Activated CD8-positive, alpha-beta T cell treated with anti-CD3 and anti-CD28 coated beads, Interleukin-2, amount 10 ng/mL, durations not matched to agents 7 days and 5 days (primary cell): ENCODE measurements at regions of chr12 and their contacts with region 1.

Region 1: GRCh38 chr12:48795480-48796455 is 6.9 kb upstream of the ADCY6 start:
- DNase-seq: peak; percentile 70
- ATAC-seq: peak; percentile 72
- H3K4me3 Mint-ChIP-seq: no peak overlapping the region
- H3K27ac Mint-ChIP-seq: no peak overlapping the region
- H3K4me1 Mint-ChIP-seq: peaks cover 14% of the 10 kb centered on the region
- H3K27me3 Mint-ChIP-seq: peaks cover 14% of the 10 kb centered on the region

Region 2: GRCh38 chr12:48659863-48660262 is 135.9 kb before region 1 on chr12:
- CTCF ChIA-PET with region 1: no interaction called
- POLR2A ChIA-PET with region 1: no interaction called
- DNase-seq: no peak
- ATAC-seq: no peak
- H3K4me3 Mint-ChIP-seq: no peak overlapping the region
- H3K27ac Mint-ChIP-seq: no peak overlapping the region
- H3K4me1 Mint-ChIP-seq: no peaks in the 10 kb centered on the region
- H3K27me3 Mint-ChIP-seq: no peaks in the 10 kb centered on the region

Region 3: GRCh38 chr12:48750769-48751735 is 44.7 kb before region 1 on chr12:
- CTCF ChIA-PET with region 1: interaction called, 267 read pairs
- POLR2A ChIA-PET with region 1: interaction called, 4 read pairs
- DNase-seq: no peak
- ATAC-seq: no peak
- H3K4me3 Mint-ChIP-seq: no peak overlapping the region
- H3K27ac Mint-ChIP-seq: no peak overlapping the region
- H3K4me1 Mint-ChIP-seq: peaks cover 8% of the 10 kb centered on the region
- H3K27me3 Mint-ChIP-seq: peaks cover 16% of the 10 kb centered on the region

Region 4: GRCh38 chr12:48758221-48758620 is 37.5 kb before region 1 on chr12:
- CTCF ChIA-PET with region 1: interaction called, 267 read pairs
- POLR2A ChIA-PET with region 1: interaction called, 4 read pairs
- DNase-seq: no peak
- ATAC-seq: no peak
- H3K4me3 Mint-ChIP-seq: no peak overlapping the region
- H3K27ac Mint-ChIP-seq: no peak overlapping the region
- H3K4me1 Mint-ChIP-seq: peaks cover 17% of the 10 kb centered on the region
- H3K27me3 Mint-ChIP-seq: peaks cover 2% of the 10 kb centered on the region

Region 5: DNA sequence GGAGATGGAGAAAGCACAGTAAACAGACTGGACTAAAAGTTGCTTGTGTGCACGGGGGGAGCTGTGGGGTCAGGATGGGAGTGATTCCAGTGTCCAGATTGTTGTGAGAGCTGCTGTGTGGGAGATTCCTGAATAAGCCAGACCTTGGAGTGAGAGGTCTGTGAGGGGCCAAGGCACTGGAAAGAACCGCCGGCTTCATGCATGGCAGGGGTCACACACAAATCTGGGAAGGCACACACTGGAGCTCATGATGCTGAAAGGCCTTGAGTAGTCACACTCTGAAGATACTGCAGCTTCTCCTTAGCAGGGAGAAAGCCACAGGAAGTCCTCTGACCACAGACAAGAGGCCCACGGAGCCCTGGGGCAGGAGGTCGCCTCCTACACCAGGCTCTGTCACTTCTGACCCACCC is 30.0 kb before region 1 on chr12:
- CTCF ChIA-PET with region 1: interaction called, 38 read pairs
- POLR2A ChIA-PET with region 1: no interaction called
- DNase-seq: peak; percentile 70
- ATAC-seq: peak; percentile 91
- H3K4me3 Mint-ChIP-seq: peak overlapping the region; percentile 35
- H3K27ac Mint-ChIP-seq: peak overlapping the region; percentile 76
- H3K4me1 Mint-ChIP-seq: peaks cover 28% of the 10 kb centered on the region
- H3K27me3 Mint-ChIP-seq: no peaks in the 10 kb centered on the region

Region 6: DNA sequence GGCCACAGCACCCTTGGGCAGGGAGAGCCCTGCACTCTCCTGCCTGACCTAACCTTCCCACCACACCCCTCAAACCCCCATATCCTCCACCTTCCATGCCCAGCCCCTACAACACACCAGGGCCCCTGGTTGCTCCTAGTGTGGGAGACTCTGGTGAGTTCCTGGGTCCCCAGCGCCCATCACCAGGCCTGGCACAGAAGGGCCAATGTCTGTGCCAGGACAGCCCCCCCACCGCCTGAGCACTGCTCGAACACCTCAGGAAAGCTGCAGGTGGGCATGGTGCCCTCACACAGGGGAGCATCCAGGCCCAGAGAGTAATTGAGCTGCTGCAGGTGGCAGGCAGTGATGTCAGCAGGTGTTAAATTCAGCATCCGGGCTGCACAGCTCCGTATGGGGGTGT is 22.1 kb before region 1 on chr12:
- CTCF ChIA-PET with region 1: interaction called, 10 read pairs
- POLR2A ChIA-PET with region 1: no interaction called
- DNase-seq: no peak
- ATAC-seq: no peak
- H3K4me3 Mint-ChIP-seq: no peak overlapping the region
- H3K27ac Mint-ChIP-seq: no peak overlapping the region
- H3K4me1 Mint-ChIP-seq: peaks cover 14% of the 10 kb centered on the region
- H3K27me3 Mint-ChIP-seq: peaks cover 5% of the 10 kb centered on the region

Region 7: DNA sequence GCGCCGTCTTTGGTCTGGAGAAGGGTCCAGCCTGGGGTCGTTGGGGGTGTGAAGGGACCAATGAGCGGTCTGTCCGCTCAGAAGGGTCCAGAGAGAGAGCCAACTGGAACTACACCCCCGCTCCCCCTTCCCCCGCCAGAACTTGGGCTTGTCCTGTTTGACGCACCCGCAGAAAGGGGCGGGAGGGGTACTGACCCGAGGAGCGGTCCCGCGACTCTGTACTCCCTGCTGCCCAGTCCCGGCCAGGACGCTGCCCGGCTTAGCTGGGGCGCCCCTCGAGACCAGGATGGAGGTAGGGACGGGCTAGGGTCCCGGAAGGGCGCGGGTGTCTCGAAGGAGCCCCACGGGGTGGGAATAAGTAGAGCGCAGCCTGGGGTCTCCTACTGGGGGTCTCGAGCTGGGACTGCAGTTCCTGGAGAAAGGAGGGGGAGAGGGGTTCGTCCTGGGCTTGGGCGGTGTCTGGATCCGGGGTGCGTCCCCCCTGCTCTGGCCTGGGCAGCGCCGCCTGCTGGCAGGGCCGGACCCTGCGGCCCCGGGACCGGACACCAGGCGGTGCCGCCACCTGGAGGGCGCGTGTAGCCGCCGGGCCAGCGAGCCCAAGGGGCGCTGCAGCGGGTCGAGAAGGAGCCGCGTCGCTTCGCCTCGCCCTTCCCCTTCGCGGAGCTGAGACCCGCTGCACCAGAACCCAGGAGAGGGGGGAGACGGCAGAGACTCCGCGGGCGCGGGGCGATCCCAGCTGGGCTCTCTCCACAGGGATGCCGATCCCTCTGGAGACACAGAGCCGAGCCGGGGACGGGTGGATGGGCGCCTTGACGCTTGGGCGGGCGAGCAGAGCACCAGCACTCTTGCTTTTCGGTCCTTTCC is 18.7 kb after region 1 on chr12:
- CTCF ChIA-PET with region 1: interaction called, 57 read pairs
- POLR2A ChIA-PET with region 1: interaction called, 3 read pairs
- DNase-seq: peak; percentile 87
- ATAC-seq: peak; percentile 85
- H3K4me3 Mint-ChIP-seq: peak overlapping the region; percentile 87
- H3K27ac Mint-ChIP-seq: peak overlapping the region; percentile 86
- H3K4me1 Mint-ChIP-seq: peaks cover 44% of the 10 kb centered on the region
- H3K27me3 Mint-ChIP-seq: peaks cover 29% of the 10 kb centered on the region